ENCODE measurements at regions of chr3 and their contacts with region 1.

Region 1: GRCh38 chr3:32018757-32019564 is 37.4 kb downstream of the ZNF860 start:
- DNase-seq: peak; percentile 62
- H3K4me3 Mint-ChIP-seq: no peak overlapping the region
- H3K27ac Mint-ChIP-seq: no peak overlapping the region
- H3K4me1 Mint-ChIP-seq: no peaks in the 10 kb centered on the region
- H3K27me3 Mint-ChIP-seq: no peaks in the 10 kb centered on the region
- CTCF ChIP-seq: peak; percentile 62

Region 2: DNA sequence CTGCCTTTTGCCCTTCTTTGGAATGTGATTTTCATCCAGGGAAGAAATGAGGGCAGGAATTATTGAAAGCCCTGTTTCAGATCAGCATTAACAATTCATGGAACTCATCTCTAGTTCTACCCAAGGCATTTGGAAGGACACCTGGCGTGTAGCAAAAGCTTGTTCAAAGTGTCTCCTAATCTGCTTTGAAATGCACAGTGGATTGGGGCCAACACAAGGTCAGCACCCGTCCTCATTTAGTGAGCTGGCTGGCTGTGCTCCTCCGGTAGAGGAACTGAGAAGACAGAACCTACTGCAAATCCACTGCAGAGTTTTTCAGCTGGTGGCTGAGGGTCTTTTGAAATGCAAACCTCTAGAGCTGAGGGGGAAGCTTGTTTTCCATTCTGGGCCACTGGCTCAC is 627.8 kb before region 1 on chr3:
- CTCF ChIA-PET with region 1: no interaction called
- POLR2A ChIA-PET with region 1: no interaction called
- intact Hi-C with region 1: no loop called
- DNase-seq: no peak
- H3K4me3 Mint-ChIP-seq: no peak overlapping the region
- H3K27ac Mint-ChIP-seq: no peak overlapping the region
- H3K4me1 Mint-ChIP-seq: no peaks in the 10 kb centered on the region
- H3K27me3 Mint-ChIP-seq: no peaks in the 10 kb centered on the region
- CTCF ChIP-seq: no peak

Region 3: DNA sequence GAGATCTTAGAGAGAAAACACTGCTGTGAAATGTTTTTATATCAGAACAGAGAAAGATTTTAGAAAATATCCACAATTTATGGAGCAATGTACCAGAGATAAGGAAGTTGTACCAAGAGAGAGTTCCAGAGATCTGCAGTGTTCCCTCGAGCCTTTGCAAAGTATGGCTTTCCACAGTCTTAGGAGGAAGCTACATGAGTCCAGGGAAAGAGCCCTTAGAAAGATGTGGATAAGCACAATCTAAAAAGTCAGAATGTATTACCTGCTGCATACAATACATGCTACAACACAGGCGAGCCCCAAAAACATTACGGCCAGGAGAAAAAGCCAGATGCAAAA is 18.9 kb after region 1 on chr3:
- CTCF ChIA-PET with region 1: interaction called, 28 read pairs
- POLR2A ChIA-PET with region 1: no interaction called
- intact Hi-C with region 1: no loop called
- DNase-seq: no peak
- H3K4me3 Mint-ChIP-seq: no peak overlapping the region
- H3K27ac Mint-ChIP-seq: no peak overlapping the region
- H3K4me1 Mint-ChIP-seq: peaks cover 8% of the 10 kb centered on the region
- H3K27me3 Mint-ChIP-seq: no peaks in the 10 kb centered on the region
- CTCF ChIP-seq: no peak

Region 4: GRCh38 chr3:32045091-32045964 is 26.4 kb after region 1 on chr3:
- CTCF ChIA-PET with region 1: interaction called, 14 read pairs
- POLR2A ChIA-PET with region 1: no interaction called
- intact Hi-C with region 1: no loop called
- DNase-seq: peak; percentile 73
- H3K4me3 Mint-ChIP-seq: peak overlapping the region; percentile 46
- H3K27ac Mint-ChIP-seq: peak overlapping the region; percentile 7
- H3K4me1 Mint-ChIP-seq: peaks cover 9% of the 10 kb centered on the region
- H3K27me3 Mint-ChIP-seq: no peaks in the 10 kb centered on the region
- CTCF ChIP-seq: no peak

Region 5: DNA sequence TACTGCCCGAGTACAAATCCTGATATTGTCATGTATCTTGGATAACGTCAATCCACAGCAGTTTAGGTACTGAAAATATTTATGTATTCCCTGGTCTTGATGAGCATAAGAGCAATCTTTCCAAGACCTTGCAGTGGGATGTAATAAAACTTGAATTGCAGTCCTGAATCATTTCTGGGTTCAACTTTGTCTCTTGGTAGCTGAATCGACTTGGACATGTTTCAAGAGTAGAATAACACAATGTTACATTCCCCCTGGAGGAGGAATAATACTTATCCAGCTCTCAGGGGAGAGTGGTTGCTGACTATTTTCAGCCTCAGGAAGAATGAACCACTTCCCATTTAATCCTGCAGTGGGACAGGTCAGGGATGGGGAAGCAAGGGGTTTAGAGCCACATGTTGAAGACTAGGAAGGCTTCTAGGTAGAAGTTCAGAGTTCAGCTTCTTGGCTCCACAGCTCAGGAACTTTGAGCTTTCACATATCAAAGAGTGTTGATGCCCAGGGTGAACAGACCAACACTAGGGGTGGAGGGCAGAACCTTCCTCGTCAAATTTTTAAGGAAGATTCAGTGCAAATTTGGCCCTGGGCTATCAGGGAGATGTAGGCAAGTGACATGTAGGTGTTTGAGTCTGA is 44.1 kb after region 1 on chr3:
- CTCF ChIA-PET with region 1: no interaction called
- POLR2A ChIA-PET with region 1: no interaction called
- intact Hi-C with region 1: no loop called
- DNase-seq: no peak
- H3K4me3 Mint-ChIP-seq: no peak overlapping the region
- H3K27ac Mint-ChIP-seq: no peak overlapping the region
- H3K4me1 Mint-ChIP-seq: no peaks in the 10 kb centered on the region
- H3K27me3 Mint-ChIP-seq: no peaks in the 10 kb centered on the region
- CTCF ChIP-seq: no peak

Region 6: GRCh38 chr3:32138545-32139104 is 119.7 kb after region 1 on chr3:
- CTCF ChIA-PET with region 1: interaction called, 65 read pairs
- POLR2A ChIA-PET with region 1: interaction called, 6 read pairs
- intact Hi-C with region 1: no loop called
- DNase-seq: no peak
- H3K4me3 Mint-ChIP-seq: no peak overlapping the region
- H3K27ac Mint-ChIP-seq: no peak overlapping the region
- H3K4me1 Mint-ChIP-seq: no peaks in the 10 kb centered on the region
- H3K27me3 Mint-ChIP-seq: no peaks in the 10 kb centered on the region
- CTCF ChIP-seq: no peak